HAP-1 (cell line): ENCODE measurements at regions of chrX and their contacts with region 1.

Region 1: GRCh38 chrX:137926090-137926489 is 360.2 kb downstream of the ZIC3 start:
- DNase-seq: peak; percentile 50 to 56
- H3K4me3 ChIP-seq: no peak overlapping the region
- H3K4me1 ChIP-seq: no peaks in the 10 kb centered on the region
- H3K27me3 ChIP-seq: no peaks in the 10 kb centered on the region

Region 2: DNA sequence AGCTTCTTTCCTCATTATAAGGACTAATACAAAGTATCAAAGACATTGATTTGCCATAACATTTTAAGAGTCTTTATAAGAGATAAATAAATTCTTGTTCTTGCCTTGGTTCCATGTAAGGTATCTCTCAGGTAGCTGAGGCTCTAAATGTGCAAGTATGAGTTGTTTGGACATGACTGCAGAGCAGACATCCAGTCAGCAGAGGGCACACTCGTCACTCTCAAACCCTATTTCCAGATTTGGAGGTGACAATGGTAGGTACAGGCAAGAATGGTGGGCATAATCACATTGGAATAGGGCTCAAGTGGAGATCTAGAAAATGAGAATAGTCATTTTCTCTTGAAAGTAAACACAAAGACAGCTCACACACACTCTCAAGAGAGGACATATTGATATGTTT is 493.5 kb before region 1 on chrX:
- in situ Hi-C with region 1: loop called (anchors 10 kb)
- DNase-seq: peak; percentile 48 to 70
- H3K4me3 ChIP-seq: no peak overlapping the region
- H3K4me1 ChIP-seq: no peaks in the 10 kb centered on the region
- H3K27me3 ChIP-seq: no peaks in the 10 kb centered on the region; the same call in 1 of the 2 replicates

Region 3: GRCh38 chrX:137771537-137771936 is 154.6 kb before region 1 on chrX:
- in situ Hi-C with region 1: no loop called
- DNase-seq: no peak
- H3K4me3 ChIP-seq: no peak overlapping the region
- H3K4me1 ChIP-seq: no peaks in the 10 kb centered on the region
- H3K27me3 ChIP-seq: no peaks in the 10 kb centered on the region

Region 4: GRCh38 chrX:138534410-138534809 is 608.3 kb after region 1 on chrX:
- in situ Hi-C with region 1: no loop called
- DNase-seq: no peak
- H3K4me3 ChIP-seq: no peak overlapping the region
- H3K4me1 ChIP-seq: no peaks in the 10 kb centered on the region
- H3K27me3 ChIP-seq: no peaks in the 10 kb centered on the region